Activated CD4-positive, alpha-beta memory T cell treated with anti-CD3 and anti-CD28 coated beads for 36 hours (primary cell): ENCODE measurements at regions of chr2 and their contacts with region 1.

Region 1: GRCh38 chr2:186589612-186590349 is at the start of gene ITGAV:
- DNase-seq: peak; percentile 91
- H3K4me3 Mint-ChIP-seq: peak within 1 kb of the TSS; percentile 76
- H3K27ac Mint-ChIP-seq: peak within 1 kb of the TSS; percentile 80
- H3K4me1 Mint-ChIP-seq: peaks cover 35% of the 10 kb centered on the region
- H3K27me3 Mint-ChIP-seq: peaks cover 3% of the 10 kb centered on the region
- total RNA-seq, gene ITGAV: 8.9 to 9.9 TPM

Region 2: GRCh38 chr2:186485871-186486650 is 103.7 kb before region 1 on chr2 and contains the start of gene ZC3H15:
- CTCF ChIA-PET with region 1: interaction called, 3 read pairs
- POLR2A ChIA-PET with region 1: interaction called, 26 read pairs
- intact Hi-C with region 1: loop called (anchors 1 kb)
- DNase-seq: peak; percentile 98
- H3K4me3 Mint-ChIP-seq: peak within 1 kb of the TSS; percentile 97
- H3K27ac Mint-ChIP-seq: peak within 1 kb of the TSS; percentile 96
- H3K4me1 Mint-ChIP-seq: peaks cover 60% of the 10 kb centered on the region
- H3K27me3 Mint-ChIP-seq: no peaks in the 10 kb centered on the region
- total RNA-seq, gene ZC3H15: 82.5 to 87.1 TPM

Region 3: DNA sequence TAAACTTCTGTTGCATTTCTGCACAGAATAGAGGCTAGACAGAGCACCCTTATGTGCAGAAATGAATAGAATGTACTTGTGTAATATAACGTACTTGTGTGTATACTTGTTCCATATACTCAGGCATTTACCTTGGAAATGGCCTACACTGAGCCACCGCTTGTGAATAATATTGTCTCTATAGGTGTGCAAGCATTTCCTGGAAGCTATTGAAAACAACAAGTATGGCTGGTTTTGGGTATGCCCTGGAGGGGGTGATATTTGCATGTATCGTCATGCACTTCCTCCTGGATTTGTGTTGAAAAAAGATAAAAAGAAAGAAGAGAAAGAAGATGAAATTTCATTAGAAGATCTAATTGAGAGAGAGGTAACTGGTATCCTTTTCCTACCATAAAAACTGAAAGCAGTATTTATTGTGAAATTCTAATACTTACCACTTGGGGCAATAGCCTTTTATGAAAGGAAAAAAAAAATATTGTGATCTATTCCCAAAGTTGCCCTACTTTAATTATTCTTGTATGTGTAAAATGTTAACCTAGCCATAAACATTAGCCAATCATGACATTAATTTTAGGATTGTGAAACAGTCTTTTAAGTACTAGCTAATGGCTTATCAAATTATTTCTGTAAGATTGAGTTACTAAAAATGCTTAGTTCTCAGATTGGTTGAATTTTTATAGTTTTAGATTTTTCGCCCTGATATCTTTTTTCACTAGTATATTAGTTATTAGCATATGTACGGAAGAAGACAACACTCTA is 85.8 kb before region 1 on chr2:
- CTCF ChIA-PET with region 1: interaction called, 13 read pairs
- POLR2A ChIA-PET with region 1: no interaction called
- intact Hi-C with region 1: no loop called
- DNase-seq: no peak
- H3K4me3 Mint-ChIP-seq: no peak overlapping the region
- H3K27ac Mint-ChIP-seq: no peak overlapping the region
- H3K4me1 Mint-ChIP-seq: peaks cover 7% of the 10 kb centered on the region
- H3K27me3 Mint-ChIP-seq: no peaks in the 10 kb centered on the region

Region 4: DNA sequence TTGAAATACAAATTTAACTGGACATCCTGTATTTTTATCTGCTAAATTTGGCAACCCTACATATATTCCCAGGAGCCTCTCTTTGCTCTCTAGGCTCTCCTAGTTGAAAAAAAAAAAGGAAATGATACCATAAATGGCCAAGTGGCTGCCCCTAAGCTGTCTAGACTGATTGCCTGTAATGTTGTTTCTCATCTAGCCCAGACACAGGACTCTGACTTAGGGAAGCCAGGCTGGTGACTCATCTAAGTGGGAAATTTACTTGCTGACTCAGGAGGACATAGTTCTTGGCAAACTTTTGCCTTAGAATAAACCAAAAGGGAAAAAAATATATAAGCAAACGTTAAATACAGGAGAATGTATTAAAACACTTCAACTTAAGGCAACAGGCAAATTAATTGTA is 14.5 kb before region 1 on chr2:
- CTCF ChIA-PET with region 1: no interaction called
- POLR2A ChIA-PET with region 1: interaction called, 5 read pairs
- intact Hi-C with region 1: loop called (anchors 2 kb)
- DNase-seq: no peak
- H3K4me3 Mint-ChIP-seq: no peak overlapping the region
- H3K27ac Mint-ChIP-seq: no peak overlapping the region
- H3K4me1 Mint-ChIP-seq: peaks cover 4% of the 10 kb centered on the region
- H3K27me3 Mint-ChIP-seq: no peaks in the 10 kb centered on the region

Region 5: GRCh38 chr2:186693446-186693832 is 103.7 kb after region 1 on chr2:
- CTCF ChIA-PET with region 1: no interaction called
- POLR2A ChIA-PET with region 1: no interaction called
- intact Hi-C with region 1: loop called (anchors 5 kb)
- DNase-seq: no peak
- H3K4me3 Mint-ChIP-seq: no peak overlapping the region
- H3K27ac Mint-ChIP-seq: no peak overlapping the region
- H3K4me1 Mint-ChIP-seq: peaks cover 7% of the 10 kb centered on the region
- H3K27me3 Mint-ChIP-seq: peaks cover 32% of the 10 kb centered on the region